Colonic mucosa (tissue), 4 donors: ENCODE measurements at regions of chr20 and their contacts with region 1.

Region 1: GRCh38 chr20:32484958-32485769 is 100.0 kb downstream of the NOL4L start:
- DNase-seq: peak; percentile 90
- H3K4me3 ChIP-seq: peak overlapping the region; percentile 71
- H3K27ac ChIP-seq: peak overlapping the region; percentile 90
- H3K4me1 ChIP-seq: peaks cover 3% of the 10 kb centered on the region
- H3K27me3 ChIP-seq: no peaks in the 10 kb centered on the region
- CTCF ChIP-seq: peak; percentile 86

Region 2: GRCh38 chr20:32207626-32208498 is 277.3 kb before region 1 on chr20 and contains the starts of genes PLAGL2 and POFUT1:
- intact Hi-C with region 1: loop called (anchors 10 kb)
- DNase-seq: peak; percentile 92
- H3K4me3 ChIP-seq: peak within 1 kb of the TSS; percentile 96
- H3K27ac ChIP-seq: peak within 1 kb of the TSS; percentile 86
- H3K4me1 ChIP-seq: peaks cover 22% of the 10 kb centered on the region
- H3K27me3 ChIP-seq: no peaks in the 10 kb centered on the region
- CTCF ChIP-seq: no peak
- total RNA-seq, gene PLAGL2: 17.7 to 18.6 TPM
- total RNA-seq, gene POFUT1: 26.9 to 36.3 TPM

Region 3: DNA sequence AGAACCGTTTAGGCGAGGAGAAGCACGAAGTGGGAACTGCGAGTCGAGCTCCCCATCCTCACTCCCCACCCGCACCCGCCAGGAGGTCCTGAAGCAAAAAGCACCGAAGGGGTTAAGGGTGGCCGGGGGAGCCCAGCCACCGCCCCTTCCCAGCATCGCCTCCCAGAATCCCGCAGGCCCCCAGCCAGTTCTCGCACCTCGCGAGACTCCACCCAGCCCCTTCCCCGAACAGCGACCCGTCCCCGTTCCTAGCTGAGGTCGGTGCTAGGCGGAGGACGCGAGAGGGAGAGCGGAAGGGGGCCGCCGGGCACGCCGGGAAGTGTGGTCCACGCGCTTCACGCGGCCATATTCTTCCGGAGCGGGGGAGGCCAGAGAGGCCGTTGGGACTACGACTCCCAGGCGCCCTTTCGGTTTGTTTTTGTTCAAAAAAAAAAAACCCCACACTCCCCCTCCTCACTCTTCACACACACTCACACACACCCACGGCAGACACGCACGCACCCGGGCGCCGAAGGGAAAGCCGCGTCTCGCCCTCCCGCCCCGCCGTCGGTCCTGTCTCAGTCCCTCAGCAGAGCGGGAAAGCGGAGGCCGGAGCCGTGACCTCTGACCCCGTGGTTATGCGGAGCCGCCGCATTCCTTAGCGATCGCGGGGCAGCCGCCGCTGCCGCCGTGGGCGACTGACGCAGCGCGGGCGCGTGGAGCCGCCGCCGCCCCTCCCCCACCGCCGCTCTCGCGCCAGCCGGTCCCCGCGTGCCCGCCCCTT is 127.1 kb before region 1 on chr20 and contains the start of gene ASXL1:
- intact Hi-C with region 1: loop called (anchors 10 kb)
- DNase-seq: peak; percentile 96
- H3K4me3 ChIP-seq: peak within 1 kb of the TSS; percentile 69
- H3K27ac ChIP-seq: peak within 1 kb of the TSS; percentile 86
- H3K4me1 ChIP-seq: peaks cover 4% of the 10 kb centered on the region
- H3K27me3 ChIP-seq: no peaks in the 10 kb centered on the region
- CTCF ChIP-seq: no peak
- total RNA-seq, gene ASXL1: 38.8 to 40.4 TPM